ENCODE measurements at regions of chr5 and their contacts with region 1.

Region 1: GRCh38 chr5:67493676-67494075 is 297.1 kb upstream of the CD180 start:
- DNase-seq: peak; percentile 62 to 64
- H3K4me3 ChIP-seq: no peak overlapping the region
- H3K4me3 Mint-ChIP-seq: no peak overlapping the region
- H3K27ac Mint-ChIP-seq: peak overlapping the region; percentile 68
- H3K4me1 ChIP-seq: no peaks in the 10 kb centered on the region
- H3K4me1 Mint-ChIP-seq: no peaks in the 10 kb centered on the region
- H3K27me3 ChIP-seq: no peaks in the 10 kb centered on the region
- H3K27me3 Mint-ChIP-seq: no peaks in the 10 kb centered on the region
- CTCF ChIP-seq: peak; percentile 23 to 62

Region 2: DNA sequence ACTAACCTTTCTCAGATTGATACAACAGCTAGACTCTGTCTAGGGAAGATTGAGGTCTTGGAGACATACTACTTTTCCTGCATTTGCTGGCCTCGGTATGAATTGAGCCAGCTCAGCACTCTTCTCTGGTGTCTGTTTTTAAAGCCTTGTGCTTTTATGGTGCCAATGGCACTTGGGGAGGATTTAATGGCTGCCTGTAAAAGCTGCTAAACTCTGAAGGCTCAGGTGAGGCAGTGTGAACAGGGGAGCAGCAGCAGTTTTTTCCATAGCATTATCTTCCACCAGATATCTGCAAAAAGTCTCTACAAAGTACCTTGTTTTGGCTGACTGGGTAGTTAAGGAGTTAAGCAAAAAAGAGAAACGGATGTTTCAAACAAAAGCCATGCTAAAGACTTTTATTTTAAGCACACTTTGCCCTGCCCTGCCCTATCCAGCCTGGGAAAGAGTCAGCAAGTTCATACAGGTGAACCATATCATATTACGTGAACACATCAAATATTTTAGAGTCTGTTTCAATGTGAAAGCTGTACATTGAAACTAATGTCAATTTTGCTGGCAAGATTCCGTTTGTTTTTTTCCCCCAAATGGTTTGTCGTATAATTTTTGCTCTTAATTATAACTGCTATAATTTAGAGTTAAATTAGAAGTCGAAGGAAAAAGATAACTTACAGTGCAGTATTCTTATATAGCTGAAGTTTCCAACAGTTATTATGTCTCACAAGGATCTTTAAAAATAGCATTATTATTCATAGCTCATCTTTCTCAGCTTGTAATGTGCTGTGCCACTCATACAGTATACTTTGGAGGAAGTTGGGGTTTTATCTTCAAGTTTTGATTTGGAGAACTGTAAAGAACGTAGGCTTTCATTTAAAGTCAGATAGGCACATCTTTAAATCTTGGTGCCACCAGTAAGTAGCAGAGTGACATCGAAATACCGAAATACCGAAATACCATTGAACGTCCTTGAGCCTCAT is 127.0 kb after region 1 on chr5:
- CTCF ChIA-PET with region 1: no interaction called
- POLR2A ChIA-PET with region 1: no interaction called
- intact Hi-C with region 1: loop called (anchors 10 kb)
- DNase-seq: no peak
- H3K4me3 ChIP-seq: no peak overlapping the region
- H3K4me3 Mint-ChIP-seq: no peak overlapping the region
- H3K27ac Mint-ChIP-seq: no peak overlapping the region
- H3K4me1 ChIP-seq: 0 out of 2 replicates have a peak, but pooled peaks cover 3% of the 10 kb centered on the region
- H3K4me1 Mint-ChIP-seq: peaks cover 15% of the 10 kb centered on the region
- H3K27me3 ChIP-seq: no peaks in the 10 kb centered on the region
- H3K27me3 Mint-ChIP-seq: no peaks in the 10 kb centered on the region
- CTCF ChIP-seq: no peak

Region 3: GRCh38 chr5:67659288-67659687 is 165.6 kb after region 1 on chr5:
- CTCF ChIA-PET with region 1: no interaction called
- POLR2A ChIA-PET with region 1: no interaction called
- intact Hi-C with region 1: no loop called
- DNase-seq: no peak
- H3K4me3 ChIP-seq: no peak overlapping the region
- H3K4me3 Mint-ChIP-seq: no peak overlapping the region
- H3K27ac Mint-ChIP-seq: no peak overlapping the region
- H3K4me1 ChIP-seq: no peaks in the 10 kb centered on the region
- H3K4me1 Mint-ChIP-seq: no peaks in the 10 kb centered on the region
- H3K27me3 ChIP-seq: no peaks in the 10 kb centered on the region
- H3K27me3 Mint-ChIP-seq: no peaks in the 10 kb centered on the region
- CTCF ChIP-seq: no peak

Region 4: DNA sequence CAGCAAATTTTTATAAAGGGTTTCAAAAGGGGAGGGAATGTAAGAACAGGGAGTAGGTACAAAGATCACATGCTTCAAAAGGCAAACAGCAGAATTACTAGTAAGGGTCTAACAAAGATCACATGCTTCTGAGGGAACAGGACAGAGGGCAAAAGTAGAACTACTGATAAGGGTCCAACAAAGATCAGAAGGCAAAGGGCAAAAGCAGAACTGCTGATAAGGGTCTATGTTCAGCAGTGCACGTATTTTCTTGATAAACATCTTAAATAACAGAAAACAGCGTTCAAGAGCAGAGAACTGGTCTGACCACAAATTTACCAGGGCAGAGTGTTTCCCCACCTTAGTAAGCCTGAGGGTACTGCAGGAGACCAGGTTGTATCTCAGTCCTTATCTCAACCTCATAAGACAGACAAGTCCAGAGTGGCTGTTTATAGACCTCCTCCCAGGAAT is 252.5 kb after region 1 on chr5:
- CTCF ChIA-PET with region 1: no interaction called
- POLR2A ChIA-PET with region 1: no interaction called
- intact Hi-C with region 1: loop called (anchors 1 kb)
- DNase-seq: peak; percentile 83 to 89
- H3K4me3 ChIP-seq: no peak overlapping the region
- H3K4me3 Mint-ChIP-seq: peak overlapping the region; percentile 3
- H3K27ac Mint-ChIP-seq: peak overlapping the region; percentile 92
- H3K4me1 ChIP-seq: peaks cover 39% of the 10 kb centered on the region
- H3K4me1 Mint-ChIP-seq: peaks cover 25% of the 10 kb centered on the region
- H3K27me3 ChIP-seq: no peaks in the 10 kb centered on the region
- H3K27me3 Mint-ChIP-seq: no peaks in the 10 kb centered on the region
- CTCF ChIP-seq: no peak

Region 5: DNA sequence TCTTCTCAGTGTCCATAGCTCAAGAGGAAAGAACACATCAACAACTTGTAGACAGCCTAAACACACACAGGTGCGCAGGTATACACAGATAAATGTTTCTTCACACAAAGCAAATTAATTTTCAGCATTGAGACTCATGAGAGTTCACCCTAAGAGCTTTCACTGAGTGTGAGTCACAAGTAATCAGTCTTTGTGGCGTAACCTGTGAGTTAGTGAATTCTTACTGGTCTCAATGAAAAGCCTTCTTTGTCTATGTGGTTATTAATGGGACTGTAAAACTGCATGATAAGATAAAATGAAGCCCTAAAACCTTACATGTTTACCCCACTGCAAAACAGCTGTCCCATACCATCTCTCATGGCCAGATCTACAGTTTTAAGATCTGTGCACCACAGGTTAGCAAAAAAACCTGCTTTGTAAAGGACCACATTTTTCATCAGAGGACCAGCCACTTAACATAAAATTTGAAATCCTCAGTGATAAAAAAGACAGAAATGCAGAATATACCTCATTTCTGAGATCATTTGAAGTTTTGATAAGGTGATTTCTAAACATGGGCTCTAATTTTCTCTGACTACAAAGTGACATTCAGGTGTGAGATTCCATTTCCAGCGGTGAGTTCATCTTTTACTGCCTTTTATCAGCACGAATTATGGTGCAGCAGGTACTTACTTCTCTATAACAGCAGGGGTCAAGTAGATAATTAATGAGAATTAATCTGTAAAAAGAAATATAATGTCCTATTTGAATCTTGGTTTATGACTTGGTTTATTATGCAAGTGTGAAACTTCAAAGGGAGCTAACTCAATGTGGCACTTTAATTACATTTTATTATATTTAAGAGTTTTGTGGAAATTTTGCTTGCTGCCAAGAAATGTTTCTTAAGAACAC is 386.2 kb after region 1 on chr5:
- CTCF ChIA-PET with region 1: no interaction called
- POLR2A ChIA-PET with region 1: no interaction called
- intact Hi-C with region 1: loop called (anchors 10 kb)
- DNase-seq: peak; percentile 56 to 65
- H3K4me3 ChIP-seq: no peak overlapping the region
- H3K4me3 Mint-ChIP-seq: peak overlapping the region; percentile 33
- H3K27ac Mint-ChIP-seq: peak overlapping the region; percentile 91
- H3K4me1 ChIP-seq: peaks cover 46% of the 10 kb centered on the region
- H3K4me1 Mint-ChIP-seq: peaks cover 40% of the 10 kb centered on the region
- H3K27me3 ChIP-seq: no peaks in the 10 kb centered on the region
- H3K27me3 Mint-ChIP-seq: no peaks in the 10 kb centered on the region
- CTCF ChIP-seq: no peak

Region 6: DNA sequence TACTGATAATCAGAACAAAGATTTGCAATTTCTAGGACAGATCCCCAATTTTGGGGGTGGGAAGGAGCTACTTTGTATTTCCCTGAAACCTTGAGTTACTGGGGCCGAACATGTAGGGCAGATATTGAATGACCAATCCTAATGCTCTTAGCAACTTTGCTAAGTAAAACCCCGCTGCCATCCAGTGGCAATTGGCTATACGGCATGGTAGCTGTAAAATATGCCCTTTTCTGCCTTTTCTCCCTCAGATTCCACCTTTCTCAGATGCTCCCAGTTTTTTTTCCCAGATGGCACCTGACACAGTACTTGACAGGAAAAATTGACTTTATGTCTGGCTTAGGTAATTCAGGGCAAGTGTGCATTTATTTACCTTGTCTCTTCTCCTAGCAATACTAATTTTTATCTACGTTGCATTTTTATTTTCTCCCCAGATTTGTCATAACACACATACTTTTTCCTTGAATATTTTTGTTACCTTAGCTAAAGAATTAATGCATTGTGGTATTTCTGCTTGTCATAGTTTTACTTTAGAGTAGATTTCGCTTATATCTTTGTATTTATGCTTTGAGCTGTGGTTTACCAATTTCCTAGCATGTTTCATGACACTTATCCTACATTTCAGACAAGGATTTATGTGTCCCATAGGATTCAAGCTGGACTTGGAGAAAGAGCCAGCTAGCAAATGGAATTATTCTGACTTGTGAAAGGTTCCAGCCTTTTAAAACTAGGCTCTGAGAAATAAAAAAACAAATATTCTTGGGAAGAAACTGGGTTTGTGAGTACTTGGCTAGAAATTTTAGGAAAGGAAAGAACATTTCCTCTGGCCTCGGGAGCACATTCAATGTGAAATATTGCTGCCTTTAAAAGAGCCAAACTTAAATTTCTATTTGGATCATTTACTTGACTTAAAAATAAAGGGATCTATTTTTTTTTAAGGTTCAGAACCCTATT is 759.3 kb after region 1 on chr5:
- CTCF ChIA-PET with region 1: no interaction called
- POLR2A ChIA-PET with region 1: no interaction called
- intact Hi-C with region 1: loop called (anchors 1 kb)
- DNase-seq: peak; percentile 66 to 74
- H3K4me3 ChIP-seq: no peak overlapping the region
- H3K4me3 Mint-ChIP-seq: no peak overlapping the region
- H3K27ac Mint-ChIP-seq: no peak overlapping the region
- H3K4me1 ChIP-seq: 0 out of 2 replicates have a peak, but pooled peaks cover 8% of the 10 kb centered on the region
- H3K4me1 Mint-ChIP-seq: peaks cover 34% of the 10 kb centered on the region
- H3K27me3 ChIP-seq: no peaks in the 10 kb centered on the region
- H3K27me3 Mint-ChIP-seq: no peaks in the 10 kb centered on the region
- CTCF ChIP-seq: peak; percentile 82 to 87

Measured in Caco-2 (cell line).